Ovary (tissue), 10 donors: ENCODE measurements at regions of chr20 and their contacts with region 1.

Region 1: DNA sequence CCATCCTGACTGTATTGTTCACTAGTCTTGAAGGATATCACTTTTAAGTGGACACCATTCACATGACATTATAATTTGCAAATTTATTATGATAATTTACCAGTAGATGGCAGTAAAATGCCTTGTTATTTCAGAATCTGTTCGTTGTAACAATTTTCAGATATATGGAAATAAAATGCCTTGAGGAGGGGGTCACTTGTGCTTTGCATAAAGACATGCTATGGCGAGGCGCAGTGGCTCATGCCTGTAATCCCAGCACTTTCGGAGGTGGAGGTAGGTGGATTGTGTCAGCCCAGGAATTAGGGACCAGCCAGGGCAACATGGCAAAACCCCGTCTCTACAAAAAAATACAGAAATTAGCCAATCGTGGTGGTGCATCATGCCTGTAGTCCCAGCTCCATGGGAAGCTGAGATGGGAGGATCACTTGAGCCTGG is 9.0 kb upstream of the NCOA6 start:
- DNase-seq: no peak
- H3K4me3 ChIP-seq: no peak overlapping the region
- H3K27ac ChIP-seq: no peak overlapping the region
- H3K4me1 ChIP-seq: no peaks in the 10 kb centered on the region
- H3K27me3 ChIP-seq: no peaks in the 10 kb centered on the region
- CTCF ChIP-seq: peak in 2 of 3 donors; percentile 34 to 41
- EP300 ChIP-seq: no peak
- POLR2A ChIP-seq: no peak

Region 2: GRCh38 chr20:34493646-34494045 is 340.8 kb before region 1 on chr20:
- intact Hi-C with region 1: no loop called
- DNase-seq: no peak
- H3K4me3 ChIP-seq: no peak overlapping the region
- H3K27ac ChIP-seq: no peak overlapping the region
- H3K4me1 ChIP-seq: no peaks in the 10 kb centered on the region
- H3K27me3 ChIP-seq: no peaks in the 10 kb centered on the region
- CTCF ChIP-seq: no peak
- EP300 ChIP-seq: no peak
- POLR2A ChIP-seq: no peak

Region 3: DNA sequence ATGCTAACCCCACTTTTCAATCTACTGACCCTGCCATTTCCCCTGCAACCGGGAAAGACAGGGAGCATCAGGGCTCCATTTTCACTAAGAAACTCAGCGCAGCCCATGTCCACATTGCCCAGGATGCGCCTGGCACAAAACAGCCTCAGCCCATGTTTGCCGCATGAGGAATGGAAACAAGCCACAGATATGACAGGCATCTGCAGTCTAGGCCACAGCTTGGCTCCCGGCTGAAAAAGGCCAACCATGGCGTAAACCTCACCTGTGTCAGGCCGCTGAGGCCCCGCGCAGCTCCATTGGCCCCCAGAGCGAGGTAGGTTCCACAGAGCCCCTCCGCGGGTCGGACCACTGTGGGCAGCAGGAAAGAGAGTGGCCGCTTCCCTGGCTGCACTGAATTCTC is 16.5 kb after region 1 on chr20:
- intact Hi-C with region 1: no loop called
- DNase-seq: no peak
- H3K4me3 ChIP-seq: no peak overlapping the region
- H3K27ac ChIP-seq: no peak overlapping the region
- H3K4me1 ChIP-seq: no peaks in the 10 kb centered on the region
- H3K27me3 ChIP-seq: no peaks in the 10 kb centered on the region
- CTCF ChIP-seq: no peak
- EP300 ChIP-seq: no peak
- POLR2A ChIP-seq: no peak

Region 4: GRCh38 chr20:34907616-34908469 is 73.4 kb after region 1 on chr20:
- intact Hi-C with region 1: no loop called
- DNase-seq: peak; percentile 39 to 72 (median 54)
- H3K4me3 ChIP-seq: no peak overlapping the region
- H3K27ac ChIP-seq: peak overlapping the region; percentile 8 to 37
- H3K4me1 ChIP-seq: peaks cover 8% of the 10 kb centered on the region
- H3K27me3 ChIP-seq: no peaks in the 10 kb centered on the region
- CTCF ChIP-seq: no peak
- EP300 ChIP-seq: no peak
- POLR2A ChIP-seq: no peak

Region 5: DNA sequence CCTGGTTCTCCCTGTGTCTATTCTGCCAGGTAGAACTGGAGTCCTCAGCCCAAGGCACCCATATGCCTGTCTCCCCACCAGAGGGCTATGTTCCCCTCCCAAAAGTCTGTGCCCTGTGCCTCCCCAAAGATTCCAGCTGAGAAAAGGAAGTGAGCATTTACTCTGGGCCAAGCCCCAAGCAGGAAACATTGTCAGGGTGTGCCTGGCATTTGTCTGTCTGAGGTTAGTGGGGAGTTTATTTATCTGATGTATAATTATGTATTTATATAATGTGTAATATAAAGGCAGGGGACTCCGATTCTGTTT is 597.9 kb after region 1 on chr20:
- intact Hi-C with region 1: loop called in 1 of 4 experiments (anchors 10 kb)
- DNase-seq: no peak
- H3K4me3 ChIP-seq: no peak overlapping the region
- H3K27ac ChIP-seq: no peak overlapping the region
- H3K4me1 ChIP-seq: peaks cover 3% of the 10 kb centered on the region
- H3K27me3 ChIP-seq: no peaks in the 10 kb centered on the region
- CTCF ChIP-seq: no peak
- EP300 ChIP-seq: no peak
- POLR2A ChIP-seq: no peak